Naive thymus-derived CD4-positive, alpha-beta T cell (primary cell): ENCODE measurements at regions of chr1 and their contacts with region 1.

Region 1: GRCh38 chr1:154157520-154158306 is 2.8 kb upstream of the NUP210L start:
- DNase-seq: peak in 8 of 9 donors; percentile 71 to 90 (median 86)
- ATAC-seq: peak; percentile 98
- H3K4me3 ChIP-seq: peak overlapping the region; percentile 12
- H3K4me3 Mint-ChIP-seq: peak overlapping the region; percentile 71 to 90 (median 79)
- H3K27ac ChIP-seq: peak overlapping the region; percentile 74
- H3K27ac Mint-ChIP-seq: peak overlapping the region; percentile 89 to 97 (median 94)
- H3K4me1 ChIP-seq: peaks cover 34 to 71% of the 10 kb centered on the region in 2 donors
- H3K4me1 Mint-ChIP-seq: peaks cover 36 to 81% (median 69%) of the 10 kb centered on the region in 7 donors
- H3K27me3 ChIP-seq: no peaks in the 10 kb centered on the region
- H3K27me3 Mint-ChIP-seq: no peaks in the 10 kb centered on the region

Region 2: GRCh38 chr1:153783233-153784190 is 374.2 kb before region 1 on chr1:
- CTCF ChIA-PET with region 1: no interaction called
- POLR2A ChIA-PET with region 1: no interaction called
- intact Hi-C with region 1: loop called in 1 of 2 experiments (anchors 10 kb)
- DNase-seq: peak; percentile 86 to 95 (median 92)
- ATAC-seq: peak; percentile 99
- H3K4me3 ChIP-seq: peak overlapping the region; percentile 78
- H3K4me3 Mint-ChIP-seq: peak overlapping the region; percentile 80 to 97 (median 90)
- H3K27ac ChIP-seq: peak overlapping the region; percentile 96
- H3K27ac Mint-ChIP-seq: peak overlapping the region; percentile 92 to 99 (median 95)
- H3K4me1 ChIP-seq: peaks cover 0 to 10% of the 10 kb centered on the region in 2 donors
- H3K4me1 Mint-ChIP-seq: peaks cover 0 to 17% (median 9%) of the 10 kb centered on the region in 7 donors
- H3K27me3 ChIP-seq: no peaks in the 10 kb centered on the region
- H3K27me3 Mint-ChIP-seq: peaks cover 0 to 6% (median 4%) of the 10 kb centered on the region in 5 donors

Region 3: DNA sequence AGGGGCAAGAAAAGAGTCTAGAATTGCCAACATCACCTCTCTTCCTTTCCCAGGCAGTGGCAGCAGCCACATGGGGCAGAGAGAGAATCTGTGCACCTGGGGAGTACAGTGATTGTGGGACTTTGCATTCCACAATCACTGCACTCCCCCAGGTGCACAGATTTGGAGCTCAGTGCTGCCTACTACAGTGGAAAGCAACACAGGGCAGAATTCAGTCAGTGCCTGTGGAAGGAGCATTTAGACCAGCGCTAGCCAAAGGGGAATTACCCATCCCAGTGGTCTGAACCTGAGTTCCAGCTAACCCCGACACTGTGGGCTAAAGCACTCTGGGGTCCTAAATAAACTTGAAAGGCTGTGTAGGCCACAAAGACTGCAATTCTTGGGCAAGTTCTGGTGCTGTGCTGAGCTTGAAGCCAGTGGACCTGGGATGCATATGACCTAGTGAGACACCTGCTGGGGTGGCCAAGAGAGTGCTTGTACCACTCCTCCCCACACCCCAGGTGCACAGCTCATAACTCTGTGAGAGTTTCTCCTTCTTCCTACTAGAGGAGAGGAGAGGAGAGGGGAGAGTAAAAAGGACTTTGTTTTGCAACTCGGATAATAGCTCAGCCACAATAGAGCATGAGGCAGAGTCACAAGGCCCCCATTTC is 53.2 kb before region 1 on chr1:
- CTCF ChIA-PET with region 1: no interaction called
- POLR2A ChIA-PET with region 1: no interaction called
- intact Hi-C with region 1: loop called in 1 of 2 experiments (anchors 5 kb)
- DNase-seq: no peak
- ATAC-seq: no peak
- H3K4me3 ChIP-seq: no peak overlapping the region
- H3K4me3 Mint-ChIP-seq: no peak overlapping the region
- H3K27ac ChIP-seq: no peak overlapping the region
- H3K27ac Mint-ChIP-seq: no peak overlapping the region
- H3K4me1 ChIP-seq: no peaks in the 10 kb centered on the region
- H3K4me1 Mint-ChIP-seq: peaks cover 0 to 4% (median 0%) of the 10 kb centered on the region in 7 donors
- H3K27me3 ChIP-seq: no peaks in the 10 kb centered on the region
- H3K27me3 Mint-ChIP-seq: peaks cover 0 to 2% (median 0%) of the 10 kb centered on the region in 5 donors

Region 4: GRCh38 chr1:154115180-154115579 is 42.5 kb before region 1 on chr1:
- CTCF ChIA-PET with region 1: no interaction called
- POLR2A ChIA-PET with region 1: no interaction called
- intact Hi-C with region 1: loop called (anchors 2 to 5 kb)
- DNase-seq: peak in 2 of 9 donors; percentile 10 to 12
- ATAC-seq: peak; percentile 75
- H3K4me3 ChIP-seq: no peak overlapping the region
- H3K4me3 Mint-ChIP-seq: no peak overlapping the region
- H3K27ac ChIP-seq: no peak overlapping the region
- H3K27ac Mint-ChIP-seq: peak overlapping the region in 4 of 9 donors; percentile 8 to 83 (median 46)
- H3K4me1 ChIP-seq: peaks cover 0 to 10% of the 10 kb centered on the region in 2 donors
- H3K4me1 Mint-ChIP-seq: peaks cover 6 to 15% (median 11%) of the 10 kb centered on the region in 7 donors
- H3K27me3 ChIP-seq: no peaks in the 10 kb centered on the region
- H3K27me3 Mint-ChIP-seq: peaks cover 0 to 7% (median 0%) of the 10 kb centered on the region in 5 donors

Region 5: GRCh38 chr1:154145986-154146385 is 11.7 kb before region 1 on chr1:
- CTCF ChIA-PET with region 1: no interaction called
- POLR2A ChIA-PET with region 1: interaction called, 5 read pairs
- intact Hi-C with region 1: loop called in 1 of 2 experiments (anchors 2 kb)
- DNase-seq: no peak
- ATAC-seq: no peak
- H3K4me3 ChIP-seq: no peak overlapping the region
- H3K4me3 Mint-ChIP-seq: no peak overlapping the region
- H3K27ac ChIP-seq: no peak overlapping the region
- H3K27ac Mint-ChIP-seq: peak overlapping the region in 1 of 9 donors; percentile 51
- H3K4me1 ChIP-seq: no peaks in the 10 kb centered on the region
- H3K4me1 Mint-ChIP-seq: peaks cover 0 to 20% (median 8%) of the 10 kb centered on the region in 7 donors
- H3K27me3 ChIP-seq: no peaks in the 10 kb centered on the region
- H3K27me3 Mint-ChIP-seq: no peaks in the 10 kb centered on the region

Region 6: DNA sequence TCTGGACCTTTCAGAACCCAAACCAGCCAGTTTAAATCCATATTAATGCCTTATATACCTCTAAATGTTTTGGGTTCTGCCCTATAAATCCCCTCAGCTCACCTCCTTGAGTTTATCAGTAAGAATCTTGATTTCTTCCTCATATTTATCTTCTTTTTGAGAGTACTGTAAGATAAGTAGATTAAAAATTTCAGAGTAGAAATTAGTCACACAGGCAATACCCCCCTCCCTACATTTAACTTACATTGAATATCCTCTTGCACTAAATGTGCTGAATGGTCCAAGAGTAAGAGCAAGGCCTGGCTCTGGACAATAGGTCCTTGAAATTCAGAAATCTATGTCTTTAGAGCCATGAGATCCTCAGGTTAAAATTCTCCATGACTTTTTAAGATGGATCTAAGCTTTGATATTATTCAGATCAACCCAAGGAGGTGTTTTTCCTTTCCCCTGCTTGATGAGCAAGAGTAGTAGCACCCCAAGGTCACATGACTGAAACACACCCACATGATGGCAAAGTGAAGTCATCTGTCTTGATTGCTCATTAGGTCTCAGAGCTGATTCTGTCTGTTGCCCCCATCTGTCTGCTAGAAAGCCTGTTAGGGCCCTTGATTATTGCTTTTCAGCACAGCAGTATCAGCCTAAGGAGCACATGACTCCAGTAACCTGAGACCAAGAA is 13.0 kb after region 1 on chr1:
- CTCF ChIA-PET with region 1: interaction called, 3 read pairs
- POLR2A ChIA-PET with region 1: interaction called, 115 read pairs
- intact Hi-C with region 1: loop called in 1 of 2 experiments (anchors 1 kb)
- DNase-seq: peak in 1 of 9 donors; percentile 58
- ATAC-seq: peak; percentile 31
- H3K4me3 ChIP-seq: no peak overlapping the region
- H3K4me3 Mint-ChIP-seq: peak overlapping the region in 1 of 10 donors; percentile 16
- H3K27ac ChIP-seq: peak overlapping the region; percentile 15
- H3K27ac Mint-ChIP-seq: peak overlapping the region; percentile 35 to 86 (median 79)
- H3K4me1 ChIP-seq: peaks cover 4 to 5% of the 10 kb centered on the region in 2 donors
- H3K4me1 Mint-ChIP-seq: peaks cover 13 to 51% (median 42%) of the 10 kb centered on the region in 7 donors
- H3K27me3 ChIP-seq: no peaks in the 10 kb centered on the region
- H3K27me3 Mint-ChIP-seq: no peaks in the 10 kb centered on the region

Region 7: DNA sequence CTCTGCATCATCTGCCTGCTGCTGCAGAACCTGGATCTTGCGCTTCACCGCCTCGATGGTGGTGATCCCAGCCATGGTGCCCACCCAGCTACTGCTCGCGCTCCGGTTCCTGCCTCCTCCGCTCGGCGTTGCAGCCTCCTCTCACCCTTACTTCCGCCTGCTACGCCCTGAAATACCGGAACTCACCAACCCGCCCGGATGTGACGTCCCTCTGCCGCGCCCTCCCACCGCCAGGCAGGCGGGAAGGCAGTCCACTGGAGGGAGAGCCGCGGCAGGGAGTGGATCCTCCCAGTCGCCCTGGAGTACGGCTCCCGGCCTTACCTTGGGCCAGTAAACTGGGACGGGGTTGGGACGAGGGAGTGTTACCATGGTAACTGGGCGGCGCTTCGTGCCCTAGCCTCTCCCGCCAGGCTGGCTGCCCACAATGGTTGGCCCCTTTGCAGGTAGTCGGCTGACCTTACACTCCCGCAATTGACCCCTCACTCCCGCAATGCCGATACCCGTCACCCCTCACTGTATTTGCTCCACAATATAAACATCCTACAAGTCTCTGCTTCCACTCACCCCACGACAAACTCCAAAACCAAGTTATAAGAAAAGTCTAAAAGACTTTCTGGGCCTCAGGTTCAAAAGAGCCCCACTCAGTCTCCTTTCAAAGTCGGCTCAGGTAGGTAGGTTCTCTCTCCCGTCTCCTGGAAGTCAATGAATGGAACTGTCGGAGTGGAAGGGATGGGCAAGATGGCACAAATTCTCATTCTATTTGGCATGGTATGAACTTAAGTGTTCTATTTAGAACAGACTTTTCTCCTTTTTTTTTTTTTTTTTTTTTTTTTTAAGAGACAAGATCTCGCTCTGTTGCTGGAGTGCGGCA is 25.6 kb after region 1 on chr1:
- CTCF ChIA-PET with region 1: interaction called, 7 read pairs
- POLR2A ChIA-PET with region 1: interaction called, 115 read pairs
- intact Hi-C with region 1: loop called (anchors 1 kb)
- DNase-seq: peak; percentile 84 to 94 (median 94)
- ATAC-seq: peak; percentile 89
- H3K4me3 ChIP-seq: peak overlapping the region; percentile 93
- H3K4me3 Mint-ChIP-seq: peak overlapping the region; percentile 98 to 100 (median 100)
- H3K27ac ChIP-seq: peak overlapping the region; percentile 95
- H3K27ac Mint-ChIP-seq: peak overlapping the region; percentile 98 to 100 (median 99)
- H3K4me1 ChIP-seq: peaks cover 25 to 44% of the 10 kb centered on the region in 2 donors
- H3K4me1 Mint-ChIP-seq: peaks cover 44 to 49% (median 48%) of the 10 kb centered on the region in 7 donors
- H3K27me3 ChIP-seq: no peaks in the 10 kb centered on the region
- H3K27me3 Mint-ChIP-seq: peaks cover 0 to 7% (median 0%) of the 10 kb centered on the region in 5 donors